ENCODE measurements at regions of chr2 and their contacts with region 1.

Region 1: GRCh38 chr2:159557451-159558034 is 58.8 kb downstream of the BAZ2B start:
- DNase-seq: peak; percentile 40
- H3K4me3 ChIP-seq: no peak overlapping the region
- H3K27ac ChIP-seq: no peak overlapping the region
- H3K4me1 ChIP-seq: no peaks in the 10 kb centered on the region
- H3K27me3 ChIP-seq: no peaks in the 10 kb centered on the region
- CTCF ChIP-seq: peak; percentile 57 to 80

Region 2: GRCh38 chr2:159677654-159678053 is 120.1 kb after region 1 on chr2:
- CTCF ChIA-PET with region 1: interaction called, 6 read pairs
- dilution Hi-C with region 1: no loop called
- in situ Hi-C with region 1: no loop called
- intact Hi-C with region 1: loop called (anchors 1 kb)
- DNase-seq: no peak
- H3K4me3 ChIP-seq: no peak overlapping the region
- H3K27ac ChIP-seq: no peak overlapping the region
- H3K4me1 ChIP-seq: no peaks in the 10 kb centered on the region
- H3K27me3 ChIP-seq: no peaks in the 10 kb centered on the region
- CTCF ChIP-seq: peak in 1 of 2 donors; percentile 42

Region 3: DNA sequence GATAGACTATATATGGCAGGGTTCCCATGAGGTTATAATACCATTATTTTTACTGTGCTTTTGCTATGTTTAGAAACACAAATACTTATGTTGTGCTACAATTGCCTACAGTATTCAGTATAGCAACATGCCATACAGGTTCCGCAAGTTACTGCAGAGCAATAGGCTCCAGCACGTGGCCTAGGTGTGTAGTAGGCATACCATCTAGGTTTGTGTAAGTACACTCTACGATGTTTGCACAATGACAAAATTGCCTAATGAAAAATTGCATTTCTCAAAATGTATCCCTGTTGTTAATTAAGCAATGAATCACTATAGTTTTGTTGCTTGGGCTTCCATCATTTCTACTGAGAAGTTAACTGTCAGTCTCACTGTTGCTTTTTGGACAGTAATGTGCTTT is 230.7 kb after region 1 on chr2:
- CTCF ChIA-PET with region 1: no interaction called
- dilution Hi-C with region 1: no loop called
- in situ Hi-C with region 1: no loop called
- intact Hi-C with region 1: no loop called
- DNase-seq: peak; percentile 27
- H3K4me3 ChIP-seq: no peak overlapping the region
- H3K27ac ChIP-seq: no peak overlapping the region
- H3K4me1 ChIP-seq: no peaks in the 10 kb centered on the region
- H3K27me3 ChIP-seq: no peaks in the 10 kb centered on the region
- CTCF ChIP-seq: no peak

Region 4: GRCh38 chr2:159807183-159808031 is 249.9 kb after region 1 on chr2:
- CTCF ChIA-PET with region 1: no interaction called
- dilution Hi-C with region 1: no loop called
- in situ Hi-C with region 1: no loop called
- intact Hi-C with region 1: loop called (anchors 5 kb)
- DNase-seq: peak; percentile 32
- H3K4me3 ChIP-seq: no peak overlapping the region
- H3K27ac ChIP-seq: no peak overlapping the region
- H3K4me1 ChIP-seq: no peaks in the 10 kb centered on the region
- H3K27me3 ChIP-seq: no peaks in the 10 kb centered on the region
- CTCF ChIP-seq: peak; percentile 79

Measured in mammary epithelial cell (primary cell).